ENCODE measurements at regions of chr4 and their contacts with region 1.

Region 1: DNA sequence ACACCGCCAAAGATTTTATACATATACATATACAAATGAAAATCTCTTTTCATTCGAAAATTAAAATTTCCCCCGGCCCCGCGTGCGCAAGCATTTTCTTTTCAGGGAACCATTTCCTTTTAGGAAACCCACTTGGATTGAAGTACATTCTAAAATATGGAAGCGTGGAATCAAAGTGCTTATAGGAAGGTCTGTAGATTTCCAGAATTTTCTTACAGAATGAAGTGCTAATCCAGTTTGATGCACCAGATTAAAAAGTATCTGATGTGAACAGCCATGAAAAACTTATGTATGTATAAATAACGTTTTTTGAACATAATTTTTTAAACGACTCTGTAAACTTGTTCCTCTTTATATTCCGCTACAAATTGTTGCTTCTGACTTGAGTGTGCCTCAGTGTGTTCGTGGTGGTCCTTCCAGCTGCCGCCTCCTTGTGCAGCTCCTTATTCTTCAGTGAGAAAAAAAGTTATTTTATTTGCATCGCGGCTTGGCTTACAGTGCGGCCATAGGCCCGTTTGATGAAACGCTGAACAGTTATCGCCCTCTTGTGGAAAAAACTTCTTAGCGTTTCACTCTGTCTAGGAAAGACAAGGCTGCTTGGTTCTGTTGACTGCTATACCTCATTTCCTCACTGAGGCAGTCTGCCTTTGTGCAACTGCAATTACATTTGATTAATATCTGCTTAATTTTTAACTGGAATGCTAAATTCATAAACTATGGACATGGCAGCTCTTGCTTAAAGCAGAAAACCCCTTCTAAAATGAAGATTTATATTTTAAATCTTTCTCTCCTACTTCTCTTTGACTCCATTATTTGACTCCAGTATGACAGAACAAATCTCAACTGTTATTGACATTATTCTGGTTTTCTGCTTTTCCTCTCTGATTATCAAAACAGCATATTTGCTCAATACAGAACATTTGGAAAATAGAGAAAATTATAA is 4.7 kb upstream of the NKX6-1 start:
- DNase-seq: peak; percentile 81 to 84 (median 84)
- H3K4me3 ChIP-seq: no peak overlapping the region
- H3K27ac ChIP-seq: no peak overlapping the region
- H3K4me1 ChIP-seq: peaks cover 0 to 12% (median 10%) of the 10 kb centered on the region in 4 experiments
- H3K27me3 ChIP-seq: peaks cover 29 to 91% (median 71%) of the 10 kb centered on the region in 5 experiments

Region 2: GRCh38 chr4:84482564-84483563 is 20.9 kb before region 1 on chr4:
- CTCF ChIA-PET with region 1: interaction called, 20 read pairs
- POLR2A ChIA-PET with region 1: no interaction called
- DNase-seq: peak; percentile 77 to 84 (median 83)
- H3K4me3 ChIP-seq: peak overlapping the region in 3 of 7 experiments; percentile 33 to 52 (median 46)
- H3K27ac ChIP-seq: no peak overlapping the region
- H3K4me1 ChIP-seq: peaks cover 0 to 19% (median 9%) of the 10 kb centered on the region in 4 experiments
- H3K27me3 ChIP-seq: peaks cover 23 to 97% (median 72%) of the 10 kb centered on the region in 5 experiments

Region 3: DNA sequence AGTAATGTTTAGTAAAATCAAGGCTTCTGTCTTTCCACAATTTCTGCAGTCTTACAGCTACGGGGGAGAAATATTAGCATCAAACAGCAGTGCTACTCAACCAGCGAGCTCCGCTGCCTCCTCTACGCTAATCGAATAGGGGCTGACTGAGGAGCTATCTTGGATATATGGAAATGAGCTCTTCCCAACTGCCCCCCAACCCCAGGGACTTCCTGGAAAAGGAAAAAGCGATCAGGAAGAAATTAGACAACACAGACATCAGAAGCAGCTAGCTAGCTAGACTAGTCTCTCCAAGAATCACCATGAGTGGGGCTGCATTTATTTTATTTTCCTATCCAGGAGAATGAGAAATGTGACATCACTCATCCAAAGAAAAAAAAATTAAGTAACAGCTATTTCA is 12.3 kb before region 1 on chr4:
- CTCF ChIA-PET with region 1: interaction called, 19 read pairs
- POLR2A ChIA-PET with region 1: no interaction called
- DNase-seq: no peak
- H3K4me3 ChIP-seq: no peak overlapping the region
- H3K27ac ChIP-seq: no peak overlapping the region
- H3K4me1 ChIP-seq: peaks cover 0 to 16% (median 11%) of the 10 kb centered on the region in 4 experiments
- H3K27me3 ChIP-seq: peaks cover 36 to 98% (median 56%) of the 10 kb centered on the region in 5 experiments